IMR-90 (cell line): ENCODE measurements at regions of chr1 and their contacts with region 1.

Region 1: GRCh38 chr1:207077470-207078377 is 10.9 kb upstream of the C4BPB start:
- DNase-seq: peak; percentile 77
- ATAC-seq: peak; percentile 99
- H3K4me3 ChIP-seq: no peak overlapping the region
- H3K27ac ChIP-seq: no peak overlapping the region
- H3K4me1 ChIP-seq: no peaks in the 10 kb centered on the region
- H3K27me3 ChIP-seq: peaks cover 6% of the 10 kb centered on the region
- CTCF ChIP-seq: peak; percentile 91
- POLR2A ChIP-seq: no peak
- RAD21 ChIP-seq: peak; percentile 89

Region 2: DNA sequence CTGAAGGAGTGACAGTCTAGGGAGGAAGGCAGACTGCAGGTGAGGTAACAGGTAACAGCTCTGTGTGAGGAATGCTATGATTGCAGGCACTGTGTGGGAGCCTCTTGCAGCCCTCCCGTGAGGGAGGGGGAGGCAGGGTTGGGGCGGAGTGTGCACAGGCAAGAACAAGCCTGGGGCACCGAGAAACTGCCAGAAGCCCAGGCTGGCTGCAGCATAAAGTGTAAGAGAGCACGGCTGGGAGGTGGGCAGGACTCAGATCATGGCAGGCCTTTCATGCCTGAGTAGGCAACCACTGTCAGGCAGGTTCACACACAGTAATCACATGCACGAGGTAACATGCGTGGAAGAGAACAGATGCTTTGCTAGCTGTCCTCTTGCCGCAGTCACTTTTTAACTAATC is 1036.1 kb before region 1 on chr1:
- CTCF ChIA-PET with region 1: no interaction called
- POLR2A ChIA-PET with region 1: no interaction called
- dilution Hi-C with region 1: no loop called
- in situ Hi-C with region 1: no loop called
- intact Hi-C with region 1: no loop called
- DNase-seq: no peak
- ATAC-seq: no peak
- H3K4me3 ChIP-seq: no peak overlapping the region
- H3K27ac ChIP-seq: no peak overlapping the region
- H3K4me1 ChIP-seq: no peaks in the 10 kb centered on the region
- H3K27me3 ChIP-seq: peaks cover 41% of the 10 kb centered on the region
- CTCF ChIP-seq: no peak
- POLR2A ChIP-seq: no peak
- RAD21 ChIP-seq: no peak

Region 3: DNA sequence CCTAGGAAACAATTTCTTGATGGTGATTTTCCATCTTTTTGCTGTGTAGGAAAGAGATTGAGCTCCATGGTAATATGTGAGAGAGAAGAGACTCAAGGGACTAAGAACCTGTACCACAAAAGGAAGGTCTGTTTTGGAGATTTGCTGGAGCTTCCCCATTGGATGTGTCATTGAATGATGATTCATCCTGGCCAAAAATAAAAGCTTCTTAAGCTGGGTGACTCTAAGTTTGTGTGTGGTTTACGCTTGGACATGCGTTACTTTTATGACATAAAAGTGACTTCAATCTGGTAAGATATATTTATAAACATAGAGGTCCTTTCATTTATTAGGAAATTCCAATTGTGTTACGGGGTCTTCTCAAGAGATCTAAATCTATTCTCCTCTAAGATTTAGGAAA is 324.6 kb before region 1 on chr1:
- CTCF ChIA-PET with region 1: no interaction called
- POLR2A ChIA-PET with region 1: no interaction called
- dilution Hi-C with region 1: no loop called
- in situ Hi-C with region 1: no loop called
- intact Hi-C with region 1: loop called (anchors 10 kb)
- DNase-seq: peak; percentile 84
- ATAC-seq: peak; percentile 57
- H3K4me3 ChIP-seq: no peak overlapping the region
- H3K27ac ChIP-seq: no peak overlapping the region
- H3K4me1 ChIP-seq: peaks cover 1% of the 10 kb centered on the region; the same call in 1 of the 2 replicates
- H3K27me3 ChIP-seq: no peaks in the 10 kb centered on the region
- CTCF ChIP-seq: no peak
- POLR2A ChIP-seq: no peak
- RAD21 ChIP-seq: no peak

Region 4: GRCh38 chr1:206992790-206993189 is 84.9 kb before region 1 on chr1:
- CTCF ChIA-PET with region 1: no interaction called
- POLR2A ChIA-PET with region 1: interaction called, 10 read pairs
- dilution Hi-C with region 1: no loop called
- in situ Hi-C with region 1: no loop called
- intact Hi-C with region 1: no loop called
- DNase-seq: no peak
- ATAC-seq: no peak
- H3K4me3 ChIP-seq: no peak overlapping the region
- H3K27ac ChIP-seq: no peak overlapping the region
- H3K4me1 ChIP-seq: no peaks in the 10 kb centered on the region
- H3K27me3 ChIP-seq: peaks cover 30% of the 10 kb centered on the region
- CTCF ChIP-seq: no peak
- POLR2A ChIP-seq: no peak
- RAD21 ChIP-seq: no peak

Region 5: DNA sequence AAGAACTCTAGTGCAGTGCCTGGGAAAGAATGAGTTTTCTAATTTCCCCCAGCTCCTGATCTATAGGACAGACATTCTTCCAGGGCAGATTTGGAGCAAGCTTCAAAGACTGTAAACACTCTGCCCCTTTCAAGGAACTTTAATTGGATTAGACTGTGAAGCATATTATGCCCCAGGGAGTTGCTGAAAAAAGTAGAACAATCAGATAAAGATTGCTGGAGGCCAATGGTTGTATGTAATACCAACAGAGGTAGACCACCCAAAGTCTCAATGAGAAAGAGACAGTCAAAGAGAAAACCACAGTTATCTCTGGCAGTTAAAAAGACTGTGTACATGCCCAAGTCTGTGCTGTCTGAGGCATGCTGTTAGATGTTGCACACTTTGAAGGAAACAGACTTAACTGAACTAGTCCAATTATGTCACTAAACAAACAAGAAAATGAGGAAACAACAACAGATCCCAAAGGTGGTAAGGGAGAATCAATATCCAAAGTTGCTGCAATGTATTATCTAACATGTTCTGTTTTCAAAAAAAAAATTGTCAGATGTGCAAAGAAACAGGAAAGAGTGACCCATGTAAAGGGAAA is 50.7 kb after region 1 on chr1:
- CTCF ChIA-PET with region 1: no interaction called
- POLR2A ChIA-PET with region 1: no interaction called
- dilution Hi-C with region 1: no loop called
- in situ Hi-C with region 1: loop called (anchors 5 kb)
- intact Hi-C with region 1: no loop called
- DNase-seq: no peak
- ATAC-seq: no peak
- H3K4me3 ChIP-seq: no peak overlapping the region
- H3K27ac ChIP-seq: no peak overlapping the region
- H3K4me1 ChIP-seq: no peaks in the 10 kb centered on the region
- H3K27me3 ChIP-seq: no peaks in the 10 kb centered on the region
- CTCF ChIP-seq: no peak
- POLR2A ChIP-seq: no peak
- RAD21 ChIP-seq: no peak